Activated CD8-positive, alpha-beta memory T cell treated with anti-CD3 and anti-CD28 coated beads, Interleukin-2, amount 10 ng/mL, durations not matched to agents 7 days and 5 days (primary cell): ENCODE measurements at regions of chr18 and their contacts with region 1.

Region 1: GRCh38 chr18:2104620-2105462 is 466.5 kb downstream of the METTL4 start:
- DNase-seq: peak; percentile 52
- ATAC-seq: peak; percentile 81
- H3K4me3 Mint-ChIP-seq: no peak overlapping the region
- H3K27ac Mint-ChIP-seq: no peak overlapping the region
- H3K4me1 Mint-ChIP-seq: no peaks in the 10 kb centered on the region
- H3K27me3 Mint-ChIP-seq: peaks cover 2% of the 10 kb centered on the region

Region 2: DNA sequence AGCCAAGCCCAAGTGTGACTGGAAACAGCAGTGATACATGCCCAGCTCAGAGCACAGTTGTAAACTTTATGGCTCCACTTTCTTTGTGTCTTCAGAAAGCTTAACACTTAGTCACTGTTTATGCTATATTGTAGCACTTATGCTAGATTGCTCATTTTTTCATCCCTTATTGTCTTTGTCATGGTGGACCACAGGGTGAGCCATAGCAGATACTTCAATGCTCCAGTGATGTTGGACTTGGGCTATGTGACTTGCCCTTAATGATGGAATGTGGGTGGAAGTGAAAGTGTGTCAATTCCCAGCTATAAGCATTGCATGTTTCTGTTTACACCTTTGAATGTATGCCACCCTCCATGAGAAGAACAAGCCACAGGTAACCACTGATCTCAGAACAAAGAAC is 64.9 kb after region 1 on chr18:
- CTCF ChIA-PET with region 1: no interaction called
- DNase-seq: no peak
- ATAC-seq: no peak
- H3K4me3 Mint-ChIP-seq: no peak overlapping the region
- H3K27ac Mint-ChIP-seq: no peak overlapping the region
- H3K4me1 Mint-ChIP-seq: no peaks in the 10 kb centered on the region
- H3K27me3 Mint-ChIP-seq: no peaks in the 10 kb centered on the region

Region 3: DNA sequence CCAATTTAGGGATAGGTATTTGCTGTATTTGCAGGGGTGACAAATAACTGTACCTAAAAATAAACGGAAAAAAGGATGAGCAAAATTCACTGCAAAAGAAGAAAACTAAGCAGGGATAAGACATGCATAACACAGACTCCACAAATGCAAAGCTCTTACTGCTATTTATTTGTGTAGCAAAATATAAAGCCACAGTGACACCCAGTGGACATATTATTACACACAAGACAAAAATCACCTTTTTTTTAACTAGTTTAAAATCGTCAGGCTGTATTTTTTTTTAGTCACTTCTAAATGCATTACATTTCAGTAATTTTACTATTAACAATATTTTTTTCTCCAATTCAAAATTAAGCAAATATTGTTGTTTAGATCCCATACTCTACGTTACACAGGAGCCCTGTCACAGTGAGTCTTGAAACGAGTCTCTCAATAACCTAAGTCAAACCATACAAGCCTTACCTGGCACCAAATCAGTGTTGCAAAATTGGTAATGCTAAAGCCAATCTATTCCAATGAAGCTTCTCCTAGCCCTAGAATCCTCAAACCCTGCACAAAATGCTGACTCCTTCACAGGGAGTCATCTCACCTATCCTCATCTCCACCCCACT is 442.7 kb after region 1 on chr18:
- CTCF ChIA-PET with region 1: interaction called, 24 read pairs
- DNase-seq: no peak
- ATAC-seq: peak; percentile 47
- H3K4me3 Mint-ChIP-seq: no peak overlapping the region
- H3K27ac Mint-ChIP-seq: no peak overlapping the region
- H3K4me1 Mint-ChIP-seq: no peaks in the 10 kb centered on the region
- H3K27me3 Mint-ChIP-seq: no peaks in the 10 kb centered on the region